Natural killer cell (primary cell): ENCODE measurements at regions of chr11 and their contacts with region 1.

Region 1: GRCh38 chr11:12087075-12088004 is 23.1 kb upstream of the MICAL2 start:
- DNase-seq: peak; percentile 51 to 76
- ATAC-seq: peak; percentile 80 to 93 (median 91)
- H3K4me3 ChIP-seq: no peak overlapping the region
- H3K4me3 Mint-ChIP-seq: peak overlapping the region; percentile 74
- H3K27ac ChIP-seq: peak overlapping the region; percentile 38
- H3K27ac Mint-ChIP-seq: peak overlapping the region; percentile 39 to 58
- H3K4me1 ChIP-seq: peaks cover 69% of the 10 kb centered on the region
- H3K4me1 Mint-ChIP-seq: peaks cover 70 to 80% of the 10 kb centered on the region in 2 donors
- H3K27me3 ChIP-seq: peaks cover 3% of the 10 kb centered on the region
- H3K27me3 Mint-ChIP-seq: peaks cover 16 to 23% of the 10 kb centered on the region in 2 donors
- CTCF ChIP-seq: no peak

Region 2: GRCh38 chr11:12216671-12217374 is 129.5 kb after region 1 on chr11:
- intact Hi-C with region 1: loop called (anchors 5 kb)
- DNase-seq: no peak
- ATAC-seq: peak; percentile 17 to 44 (median 35)
- H3K4me3 ChIP-seq: no peak overlapping the region
- H3K4me3 Mint-ChIP-seq: peak overlapping the region; percentile 70
- H3K27ac ChIP-seq: peak overlapping the region; percentile 28
- H3K27ac Mint-ChIP-seq: peak overlapping the region; percentile 83 to 90
- H3K4me1 ChIP-seq: peaks cover 49% of the 10 kb centered on the region
- H3K4me1 Mint-ChIP-seq: peaks cover 48 to 51% of the 10 kb centered on the region in 2 donors
- H3K27me3 ChIP-seq: no peaks in the 10 kb centered on the region
- H3K27me3 Mint-ChIP-seq: peaks cover 8 to 14% of the 10 kb centered on the region in 2 donors
- CTCF ChIP-seq: no peak

Region 3: GRCh38 chr11:12281571-12282478 is 194.5 kb after region 1 on chr11:
- intact Hi-C with region 1: loop called (anchors 1 kb)
- DNase-seq: peak; percentile 73 to 88
- ATAC-seq: peak; percentile 77 to 86 (median 82)
- H3K4me3 ChIP-seq: no peak overlapping the region
- H3K4me3 Mint-ChIP-seq: no peak overlapping the region
- H3K27ac ChIP-seq: no peak overlapping the region
- H3K27ac Mint-ChIP-seq: no peak overlapping the region
- H3K4me1 ChIP-seq: peaks cover 4% of the 10 kb centered on the region
- H3K4me1 Mint-ChIP-seq: no peaks in the 10 kb centered on the region
- H3K27me3 ChIP-seq: no peaks in the 10 kb centered on the region
- H3K27me3 Mint-ChIP-seq: no peaks in the 10 kb centered on the region
- CTCF ChIP-seq: peak; percentile 95

Region 4: DNA sequence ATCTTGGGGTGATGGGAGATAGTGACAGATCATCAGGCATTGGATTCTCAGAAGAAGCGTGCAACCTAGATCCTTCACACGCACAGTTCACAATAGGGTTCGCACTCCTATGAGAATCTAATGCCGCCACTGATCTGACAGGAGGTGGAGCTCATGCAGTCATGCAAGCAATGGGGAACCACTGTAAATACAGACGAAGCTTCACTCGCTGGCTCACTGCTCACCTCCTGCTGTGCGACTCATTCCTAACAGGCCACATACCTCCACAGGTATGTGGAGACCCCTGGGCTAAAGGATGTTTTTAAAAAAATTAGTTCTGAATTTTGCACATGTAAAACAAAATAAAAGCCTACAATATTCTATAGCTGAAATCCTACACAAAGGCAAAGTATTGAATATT is 566.4 kb after region 1 on chr11:
- intact Hi-C with region 1: no loop called
- DNase-seq: no peak
- ATAC-seq: no peak
- H3K4me3 ChIP-seq: no peak overlapping the region
- H3K4me3 Mint-ChIP-seq: no peak overlapping the region
- H3K27ac ChIP-seq: no peak overlapping the region
- H3K27ac Mint-ChIP-seq: no peak overlapping the region
- H3K4me1 ChIP-seq: no peaks in the 10 kb centered on the region
- H3K4me1 Mint-ChIP-seq: no peaks in the 10 kb centered on the region
- H3K27me3 ChIP-seq: no peaks in the 10 kb centered on the region
- H3K27me3 Mint-ChIP-seq: peaks cover 0 to 7% of the 10 kb centered on the region in 2 donors
- CTCF ChIP-seq: no peak